Esophagus squamous epithelium (tissue), 5 donors: ENCODE measurements at regions of chr22 and their contacts with region 1.

Region 1: DNA sequence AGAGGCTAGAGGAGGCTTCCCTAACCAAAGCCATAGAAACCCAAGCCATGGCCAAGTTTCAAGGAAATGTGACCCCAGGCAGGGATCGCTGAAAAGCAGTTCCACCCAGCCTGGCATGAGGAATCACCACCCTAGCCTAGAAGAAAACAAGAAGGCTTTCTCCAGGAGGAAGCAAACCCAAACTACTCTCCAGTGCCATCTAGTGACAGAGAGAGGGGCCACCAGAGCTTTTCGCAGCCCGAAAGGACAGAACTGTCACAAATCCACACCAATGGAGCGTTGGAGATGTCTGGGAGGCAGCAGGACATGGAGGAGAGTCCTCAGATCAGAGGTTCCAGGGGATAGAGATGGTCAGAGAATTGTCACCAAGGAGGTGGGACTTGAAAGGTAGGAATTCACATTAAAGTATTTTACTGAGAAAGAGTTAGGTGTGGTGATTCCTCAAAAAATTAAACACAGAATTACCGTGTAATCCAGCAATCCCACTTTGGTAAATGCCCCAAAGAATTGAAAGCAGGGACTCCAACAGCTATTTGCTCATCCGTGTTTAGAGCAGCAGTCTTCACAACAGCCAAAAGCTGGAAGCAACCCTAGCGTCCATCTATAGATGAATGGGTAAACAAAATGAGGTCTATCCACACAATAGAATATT is 67.3 kb upstream of the NUP50 start:
- DNase-seq: no peak
- H3K4me3 ChIP-seq: no peak overlapping the region
- H3K27ac ChIP-seq: no peak overlapping the region
- H3K4me1 ChIP-seq: peaks cover 0 to 4% (median 0%) of the 10 kb centered on the region in 3 donors
- H3K27me3 ChIP-seq: peaks cover 0 to 92% (median 0%) of the 10 kb centered on the region in 4 donors
- CTCF ChIP-seq: peak; percentile 31 to 80 (median 64)
- POLR2A ChIP-seq: no peak

Region 2: DNA sequence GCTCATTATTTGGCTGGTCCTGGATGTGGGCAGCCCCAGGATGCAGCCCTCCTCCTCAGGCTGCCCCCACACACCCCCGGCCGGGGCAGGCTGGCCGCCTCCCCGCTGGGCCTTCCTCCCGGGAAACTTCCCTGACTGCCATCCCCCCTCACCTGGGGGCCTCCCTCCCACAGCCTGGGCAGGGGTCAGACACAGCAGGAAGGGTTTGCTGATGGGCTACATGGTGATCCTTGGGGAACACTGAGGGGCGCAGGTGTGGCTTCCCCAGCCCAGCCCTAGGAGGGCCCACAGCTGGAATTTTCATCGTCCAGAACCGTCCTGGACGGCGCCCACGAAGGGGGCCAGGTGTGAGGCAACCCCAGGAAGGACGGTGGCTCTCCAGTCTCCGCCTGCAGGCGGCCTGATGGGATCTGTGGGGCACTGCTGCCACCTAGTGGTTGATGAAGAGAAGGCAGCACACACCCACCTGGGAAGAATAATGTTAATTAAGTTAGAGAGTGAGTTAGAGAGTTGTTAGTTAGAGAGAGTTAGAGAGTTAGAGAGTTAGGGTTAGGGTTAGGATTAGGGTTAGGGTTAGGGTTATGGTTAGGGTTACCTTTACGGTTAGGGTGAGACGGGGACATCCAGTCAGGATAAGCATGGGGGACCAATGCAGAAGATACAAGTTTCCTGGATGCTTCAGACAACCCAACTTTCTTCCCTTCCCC is 470.2 kb before region 1 on chr22:
- intact Hi-C with region 1: no loop called
- DNase-seq: no peak
- H3K4me3 ChIP-seq: no peak overlapping the region
- H3K27ac ChIP-seq: no peak overlapping the region
- H3K4me1 ChIP-seq: peaks cover 0 to 4% (median 3%) of the 10 kb centered on the region in 3 donors
- H3K27me3 ChIP-seq: peaks cover 0 to 63% (median under 1%) of the 10 kb centered on the region in 4 donors
- CTCF ChIP-seq: peak; percentile 82 to 99 (median 98)
- POLR2A ChIP-seq: no peak

Region 3: GRCh38 chr22:44988671-44989070 is 107.7 kb before region 1 on chr22:
- intact Hi-C with region 1: loop called (anchors 10 kb)
- DNase-seq: no peak
- H3K4me3 ChIP-seq: no peak overlapping the region
- H3K27ac ChIP-seq: no peak overlapping the region
- H3K4me1 ChIP-seq: no peaks in the 10 kb centered on the region
- H3K27me3 ChIP-seq: peaks cover 0 to 5% (median 0%) of the 10 kb centered on the region in 4 donors
- CTCF ChIP-seq: no peak
- POLR2A ChIP-seq: no peak